ENCODE measurements at regions of chr9 and their contacts with region 1.

Region 1: DNA sequence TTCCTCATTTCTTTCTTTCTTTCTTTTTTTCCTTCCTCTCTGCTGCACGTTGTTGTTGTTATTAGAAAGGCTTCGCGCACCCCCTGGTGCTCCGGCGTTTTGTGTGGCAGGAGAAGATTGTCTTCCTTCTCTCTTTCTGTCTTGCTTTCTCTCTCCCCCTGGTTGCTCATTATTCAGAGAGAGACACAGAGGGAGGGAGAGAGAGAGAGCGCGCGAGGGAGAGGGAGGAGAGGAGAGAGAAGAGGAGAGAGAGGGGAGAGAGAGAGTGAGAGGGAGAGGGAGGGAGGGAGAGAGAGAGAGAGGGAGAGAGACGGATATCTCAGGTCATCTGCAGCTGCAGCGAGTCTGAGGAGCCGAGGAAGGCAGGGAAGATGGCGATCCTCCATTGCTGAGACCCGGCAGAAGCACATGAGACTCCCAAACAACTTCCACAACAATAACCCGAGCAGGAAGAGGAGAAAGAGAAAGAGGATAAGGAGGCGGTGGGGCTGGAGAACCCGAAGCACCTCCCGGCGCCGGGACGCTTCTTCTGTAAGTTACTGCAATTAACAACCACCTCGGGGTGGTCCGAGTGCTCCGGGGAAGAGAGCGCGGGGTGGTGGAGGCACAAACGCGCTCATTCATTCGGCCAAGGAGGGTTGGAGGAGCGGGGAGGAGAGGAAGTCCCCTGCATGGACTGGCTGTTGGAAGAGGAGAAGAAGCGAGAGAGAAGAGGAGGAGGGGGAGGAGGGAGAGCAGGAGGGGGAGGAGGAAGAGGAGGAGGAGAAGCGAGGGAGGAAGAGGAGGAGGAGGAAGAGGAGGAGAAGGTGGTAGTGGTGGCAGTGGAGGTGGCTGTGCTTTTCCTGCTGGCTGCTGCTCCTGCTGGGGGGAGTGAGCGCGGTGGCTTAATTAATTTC is at the start of gene ZNF462:
- DNase-seq: peak; percentile 70
- ATAC-seq: peak; percentile 51
- total RNA-seq, gene ZNF462: 21.1 TPM

Region 2: DNA sequence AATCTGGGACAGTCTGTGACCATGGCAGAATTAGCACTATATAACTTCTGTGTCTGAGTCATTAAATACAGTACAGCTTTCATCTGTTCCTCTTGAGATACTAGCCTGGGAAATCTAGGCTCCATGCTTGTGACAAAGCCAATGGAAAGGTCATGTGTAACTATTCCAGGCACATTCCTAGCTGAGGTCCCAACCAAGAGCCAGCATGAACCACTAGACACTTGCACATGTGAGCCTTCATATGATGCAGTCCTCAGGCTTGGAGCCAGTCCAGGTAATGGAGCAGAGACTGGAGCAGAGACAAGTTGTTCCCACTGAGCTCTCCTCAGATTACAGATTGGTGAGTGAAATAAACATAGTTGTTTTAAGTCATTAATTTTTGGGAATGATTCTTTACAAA is 412.5 kb before region 1 on chr9:
- intact Hi-C with region 1: loop called (anchors 5 kb)
- DNase-seq: no peak
- ATAC-seq: peak; percentile 95

Region 3: GRCh38 chr9:106675745-106676144 is 187.3 kb before region 1 on chr9:
- intact Hi-C with region 1: loop called (anchors 10 kb)
- DNase-seq: no peak
- ATAC-seq: peak; percentile 93

Region 4: GRCh38 chr9:106962615-106963363 is 99.7 kb after region 1 on chr9:
- intact Hi-C with region 1: loop called (anchors 5 kb)
- DNase-seq: no peak
- ATAC-seq: peak; percentile 68

Region 5: DNA sequence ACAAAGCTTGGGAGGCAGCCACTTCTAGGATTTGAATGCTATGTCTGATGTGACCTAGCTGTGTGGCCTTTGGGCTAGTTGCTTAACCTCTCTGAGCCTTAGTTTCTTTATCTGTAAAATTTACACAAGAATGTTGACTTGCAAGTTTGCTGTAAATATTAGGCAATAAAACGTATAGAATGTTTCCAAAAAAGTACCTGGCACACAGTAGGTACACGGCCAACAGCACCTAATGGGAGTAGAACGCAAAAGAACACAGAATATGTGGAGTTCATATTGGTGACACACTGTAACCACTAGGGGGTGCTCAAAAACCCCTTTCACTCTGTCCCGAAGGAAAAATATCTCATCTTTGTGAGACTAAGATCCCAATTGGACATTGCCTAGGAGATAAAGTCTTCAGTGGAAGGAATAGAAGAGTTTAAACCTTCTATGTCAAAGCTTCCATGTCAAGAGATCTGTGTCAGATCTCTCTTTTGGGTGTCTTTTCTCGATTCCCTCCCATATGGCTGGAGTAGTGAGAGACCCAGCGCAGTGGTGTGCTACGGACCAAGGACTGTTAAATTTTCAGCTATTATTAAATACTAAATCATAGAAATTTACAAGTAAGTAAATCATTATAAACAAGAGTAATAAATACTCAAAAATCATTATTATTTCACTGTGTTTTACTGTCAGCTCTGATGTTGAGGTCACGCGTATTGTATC is 274.6 kb after region 1 on chr9:
- intact Hi-C with region 1: loop called (anchors 10 kb)
- DNase-seq: no peak
- ATAC-seq: no peak